ENCODE measurements at regions of chr2 and their contacts with region 1.

Region 1: GRCh38 chr2:39568561-39569006 is 97.1 kb upstream of the TMEM178A start:
- DNase-seq: peak; percentile 89
- H3K4me3 ChIP-seq: peak overlapping the region in 1 of 3 experiments; percentile 11
- H3K27ac ChIP-seq: peak overlapping the region; percentile 83
- H3K4me1 ChIP-seq: peaks cover 20% of the 10 kb centered on the region
- H3K27me3 ChIP-seq: no peaks in the 10 kb centered on the region
- CTCF ChIP-seq: no peak
- POLR2A ChIP-seq: no peak

Region 2: DNA sequence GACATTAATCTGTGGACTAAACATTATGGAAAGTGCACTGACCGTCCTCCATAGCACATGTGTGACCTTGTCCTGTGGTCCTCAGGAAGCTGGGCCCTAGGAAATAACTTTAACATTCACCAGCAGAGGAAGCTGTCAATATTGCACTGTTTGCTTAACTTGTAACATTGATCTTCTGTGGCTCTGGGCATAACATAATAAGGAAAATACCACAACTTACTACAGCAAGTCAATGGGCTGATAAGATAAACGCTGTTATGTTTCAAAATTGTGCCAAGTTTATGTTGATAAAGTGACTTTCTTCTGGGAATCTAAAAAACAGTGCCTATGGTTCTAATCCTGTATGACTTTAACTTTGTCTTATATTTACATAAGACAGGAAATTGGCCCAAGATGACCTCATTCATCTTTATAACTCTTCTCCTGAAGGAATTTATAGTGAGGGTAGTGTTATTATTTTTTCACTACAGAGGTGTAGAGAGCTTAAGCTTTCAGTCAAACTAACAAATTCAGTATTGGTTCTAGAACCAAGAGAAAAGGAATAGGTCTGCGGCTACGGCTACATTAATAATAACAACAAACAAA is 17.8 kb before region 1 on chr2:
- CTCF ChIA-PET with region 1: interaction called, 7 read pairs
- POLR2A ChIA-PET with region 1: no interaction called
- dilution Hi-C with region 1: no loop called
- intact Hi-C with region 1: loop called (anchors 1 kb)
- DNase-seq: peak; percentile 78
- H3K4me3 ChIP-seq: no peak overlapping the region
- H3K27ac ChIP-seq: peak overlapping the region; percentile 57
- H3K4me1 ChIP-seq: peaks cover 20% of the 10 kb centered on the region
- H3K27me3 ChIP-seq: no peaks in the 10 kb centered on the region
- CTCF ChIP-seq: no peak
- POLR2A ChIP-seq: peak; percentile 42

Region 3: DNA sequence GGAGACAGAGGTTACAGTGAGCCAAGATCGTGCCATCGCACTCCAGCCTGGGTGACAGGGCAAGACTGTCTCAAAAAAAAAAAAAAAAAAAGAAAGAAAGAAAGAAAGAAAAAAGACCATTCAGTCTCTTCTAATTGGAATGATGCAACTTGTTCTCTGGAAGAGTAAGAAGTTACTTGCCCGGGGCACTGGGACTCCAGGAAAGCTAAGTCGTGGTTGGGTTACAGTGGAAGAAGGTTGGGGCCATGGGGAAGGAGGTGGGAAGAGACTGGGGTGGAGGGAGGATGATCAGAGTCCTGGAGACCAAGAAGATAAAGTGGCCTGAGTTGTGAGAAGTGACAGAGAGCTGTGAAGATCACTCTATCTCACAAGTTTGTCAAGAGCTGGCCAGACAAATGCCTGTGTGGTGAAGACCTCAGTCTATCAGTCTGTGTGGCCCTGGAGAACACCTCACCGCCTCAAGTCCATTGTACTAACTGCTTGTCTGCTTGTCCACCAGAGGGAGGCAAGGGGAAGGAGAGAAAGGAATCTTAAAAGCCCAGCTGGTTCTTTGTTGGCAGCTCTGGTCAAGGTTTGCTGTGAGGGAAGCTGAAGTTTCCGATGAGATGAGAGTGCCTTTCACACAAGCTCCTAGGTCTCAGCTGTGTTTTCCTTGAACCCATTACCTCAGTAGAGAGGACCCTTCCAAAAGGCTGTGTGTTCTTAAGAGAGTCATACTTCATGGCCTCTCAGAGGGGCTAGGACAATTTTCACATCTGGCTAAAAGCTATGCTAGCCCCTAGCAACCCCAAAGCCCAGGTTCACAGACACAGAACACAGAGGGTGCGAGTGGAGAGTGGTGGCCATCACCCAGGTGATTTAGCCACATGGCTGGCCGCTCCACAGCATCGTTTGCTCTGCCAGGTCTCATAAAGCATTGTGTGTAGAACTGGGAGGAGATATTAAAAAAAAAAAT is 25.1 kb after region 1 on chr2:
- CTCF ChIA-PET with region 1: interaction called, 11 read pairs
- POLR2A ChIA-PET with region 1: no interaction called
- dilution Hi-C with region 1: no loop called
- intact Hi-C with region 1: no loop called
- DNase-seq: peak; percentile 74
- H3K4me3 ChIP-seq: no peak overlapping the region
- H3K27ac ChIP-seq: no peak overlapping the region
- H3K4me1 ChIP-seq: no peaks in the 10 kb centered on the region
- H3K27me3 ChIP-seq: no peaks in the 10 kb centered on the region
- CTCF ChIP-seq: peak; percentile 48 to 71
- POLR2A ChIP-seq: no peak

Region 4: DNA sequence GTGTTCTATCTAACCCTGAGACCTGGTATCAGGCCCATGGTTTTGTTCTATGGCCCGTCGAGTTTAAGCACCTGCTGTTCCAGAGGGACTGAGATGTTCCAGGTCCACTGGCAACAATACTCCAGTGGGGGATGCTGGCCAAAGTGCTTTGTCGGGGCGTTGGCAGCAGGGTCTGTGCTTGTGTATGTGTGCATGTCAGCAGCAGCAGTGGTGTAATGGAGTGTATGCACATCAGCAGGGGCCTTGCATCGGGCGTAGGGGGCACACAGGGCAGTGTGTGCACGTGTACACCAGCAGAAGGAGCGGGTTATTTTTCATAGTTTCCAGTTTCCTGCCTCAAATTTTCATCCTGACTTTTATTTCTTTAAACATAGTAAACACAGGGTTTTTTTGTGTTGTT is 248.3 kb after region 1 on chr2:
- CTCF ChIA-PET with region 1: no interaction called
- POLR2A ChIA-PET with region 1: no interaction called
- dilution Hi-C with region 1: no loop called
- intact Hi-C with region 1: no loop called
- DNase-seq: no peak
- H3K4me3 ChIP-seq: no peak overlapping the region
- H3K27ac ChIP-seq: no peak overlapping the region
- H3K4me1 ChIP-seq: no peaks in the 10 kb centered on the region
- H3K27me3 ChIP-seq: no peaks in the 10 kb centered on the region
- CTCF ChIP-seq: no peak
- POLR2A ChIP-seq: no peak

Measured in endothelial cell of umbilical vein (primary cell).